Breast epithelium (tissue), 4 donors: ENCODE measurements at regions of chr13 and their contacts with region 1.

Region 1: GRCh38 chr13:31413516-31413915 is 213.7 kb downstream of the B3GLCT start:
- DNase-seq: no peak
- H3K4me3 ChIP-seq: no peak overlapping the region
- H3K27ac ChIP-seq: no peak overlapping the region
- H3K4me1 ChIP-seq: no peaks in the 10 kb centered on the region
- H3K27me3 ChIP-seq: no peaks in the 10 kb centered on the region
- CTCF ChIP-seq: no peak
- POLR2A ChIP-seq: no peak

Region 2: DNA sequence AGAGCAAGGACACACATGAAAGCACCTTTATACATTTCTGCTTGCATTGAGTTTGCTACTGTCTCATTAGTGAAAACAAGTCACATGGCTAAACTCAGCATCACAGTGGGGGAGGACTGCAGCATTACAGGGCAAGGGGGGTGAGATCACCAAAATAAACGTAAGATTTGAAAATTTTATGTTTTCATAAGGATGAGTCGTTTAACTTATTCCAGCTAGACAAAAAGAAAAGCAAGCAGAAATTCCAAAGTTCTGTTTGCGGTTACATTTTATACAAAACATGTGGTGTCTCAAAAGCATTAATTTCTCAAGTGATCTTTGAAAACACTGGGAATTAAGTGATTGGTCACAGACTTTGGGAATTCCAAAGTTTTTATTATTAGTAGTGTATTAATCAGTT is 64.4 kb after region 1 on chr13:
- intact Hi-C with region 1: loop called (anchors 2 kb)
- DNase-seq: no peak
- H3K4me3 ChIP-seq: no peak overlapping the region
- H3K27ac ChIP-seq: peak overlapping the region in 1 of 2 donors; percentile 38
- H3K4me1 ChIP-seq: no peaks in the 10 kb centered on the region
- H3K27me3 ChIP-seq: no peaks in the 10 kb centered on the region
- CTCF ChIP-seq: no peak
- POLR2A ChIP-seq: no peak

Region 3: GRCh38 chr13:32811297-32811800 is 1397.8 kb after region 1 on chr13:
- intact Hi-C with region 1: no loop called
- DNase-seq: no peak
- H3K4me3 ChIP-seq: no peak overlapping the region
- H3K27ac ChIP-seq: no peak overlapping the region
- H3K4me1 ChIP-seq: no peaks in the 10 kb centered on the region
- H3K27me3 ChIP-seq: no peaks in the 10 kb centered on the region
- CTCF ChIP-seq: no peak
- POLR2A ChIP-seq: no peak